IMR-90 (cell line): ENCODE measurements at regions of chr1 and their contacts with region 1.

Region 1: GRCh38 chr1:108746372-108747205 is at the start of gene STXBP3:
- DNase-seq: peak; percentile 98
- ATAC-seq: peak; percentile 95
- H3K4me3 ChIP-seq: peak within 1 kb of the TSS; percentile 76
- H3K27ac ChIP-seq: peak within 1 kb of the TSS; percentile 86
- H3K4me1 ChIP-seq: no peaks in the 10 kb centered on the region
- H3K27me3 ChIP-seq: peaks cover 4% of the 10 kb centered on the region; the same call in 1 of the 2 replicates
- CTCF ChIP-seq: peak; percentile 95
- POLR2A ChIP-seq: peak; percentile 92
- RAD21 ChIP-seq: peak; percentile 49
- total RNA-seq, gene STXBP3: 19.7 and 38.3 TPM in 2 replicates

Region 2: GRCh38 chr1:108691942-108692723 is 54.5 kb before region 1 on chr1 and contains the start of gene PRPF38B:
- CTCF ChIA-PET with region 1: no interaction called
- POLR2A ChIA-PET with region 1: interaction called, 5 read pairs
- dilution Hi-C with region 1: no loop called
- in situ Hi-C with region 1: loop called (anchors 5 kb)
- intact Hi-C with region 1: loop called (anchors 1 kb)
- DNase-seq: peak; percentile 87
- ATAC-seq: peak; percentile 97
- H3K4me3 ChIP-seq: peak within 1 kb of the TSS; percentile 84
- H3K27ac ChIP-seq: peak within 1 kb of the TSS; percentile 97
- H3K4me1 ChIP-seq: no peaks in the 10 kb centered on the region
- H3K27me3 ChIP-seq: no peaks in the 10 kb centered on the region
- CTCF ChIP-seq: no peak
- POLR2A ChIP-seq: peak; percentile 97
- RAD21 ChIP-seq: no peak
- total RNA-seq, gene PRPF38B: 9.0 and 15.0 TPM in 2 replicates

Region 3: DNA sequence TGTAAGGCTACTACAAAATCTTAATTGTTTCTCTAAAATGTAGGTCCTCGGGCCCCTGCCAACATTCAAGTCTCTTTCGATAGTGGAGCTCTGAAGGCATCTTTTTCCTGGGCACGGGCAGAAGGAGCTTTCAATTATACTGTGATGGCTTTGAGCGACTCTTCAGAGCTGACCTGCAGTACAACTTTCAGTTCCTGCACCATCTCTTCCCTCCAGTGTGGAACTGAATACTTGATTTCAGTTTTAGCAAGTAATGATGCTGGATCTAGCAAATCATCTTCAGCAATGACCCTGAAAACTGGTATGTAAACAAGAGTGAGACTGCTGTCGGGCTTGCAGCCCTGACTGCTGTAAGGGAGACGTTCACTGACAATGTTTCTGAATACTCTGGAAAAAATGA is 24.3 kb before region 1 on chr1:
- CTCF ChIA-PET with region 1: interaction called, 4 read pairs
- POLR2A ChIA-PET with region 1: no interaction called
- dilution Hi-C with region 1: no loop called
- in situ Hi-C with region 1: no loop called
- intact Hi-C with region 1: loop called (anchors 2 kb)
- DNase-seq: peak; percentile 77
- ATAC-seq: peak; percentile 71
- H3K4me3 ChIP-seq: peak overlapping the region; percentile 2; the same call in 1 of the 2 replicates
- H3K27ac ChIP-seq: peak overlapping the region; percentile 75; the same call in 1 of the 2 replicates
- H3K4me1 ChIP-seq: peaks cover 18% of the 10 kb centered on the region
- H3K27me3 ChIP-seq: no peaks in the 10 kb centered on the region
- CTCF ChIP-seq: no peak
- POLR2A ChIP-seq: no peak
- RAD21 ChIP-seq: peak; percentile 3; the same call in 1 of the 2 replicates

Region 4: GRCh38 chr1:108792420-108792819 is 45.8 kb after region 1 on chr1:
- CTCF ChIA-PET with region 1: no interaction called
- POLR2A ChIA-PET with region 1: interaction called, 10 read pairs
- dilution Hi-C with region 1: no loop called
- in situ Hi-C with region 1: no loop called
- intact Hi-C with region 1: no loop called
- DNase-seq: no peak
- ATAC-seq: no peak
- H3K4me3 ChIP-seq: no peak overlapping the region
- H3K27ac ChIP-seq: no peak overlapping the region
- H3K4me1 ChIP-seq: no peaks in the 10 kb centered on the region
- H3K27me3 ChIP-seq: no peaks in the 10 kb centered on the region
- CTCF ChIP-seq: no peak
- POLR2A ChIP-seq: no peak
- RAD21 ChIP-seq: no peak

Region 5: GRCh38 chr1:108963052-108963686 is 216.6 kb after region 1 on chr1 and contains the start of gene CLCC1:
- CTCF ChIA-PET with region 1: no interaction called
- POLR2A ChIA-PET with region 1: no interaction called
- dilution Hi-C with region 1: no loop called
- in situ Hi-C with region 1: no loop called
- intact Hi-C with region 1: no loop called
- DNase-seq: peak; percentile 90
- ATAC-seq: peak; percentile 99
- H3K4me3 ChIP-seq: peak within 1 kb of the TSS; percentile 100
- H3K27ac ChIP-seq: peak within 1 kb of the TSS; percentile 98
- H3K4me1 ChIP-seq: 0 out of 2 replicates have a peak, but pooled peaks cover 2% of the 10 kb centered on the region
- H3K27me3 ChIP-seq: no peaks in the 10 kb centered on the region
- CTCF ChIP-seq: no peak
- POLR2A ChIP-seq: peak; percentile 79; the same call in 1 of the 2 replicates
- RAD21 ChIP-seq: no peak
- total RNA-seq, gene CLCC1: 29.6 and 41.4 TPM in 2 replicates

Region 6: DNA sequence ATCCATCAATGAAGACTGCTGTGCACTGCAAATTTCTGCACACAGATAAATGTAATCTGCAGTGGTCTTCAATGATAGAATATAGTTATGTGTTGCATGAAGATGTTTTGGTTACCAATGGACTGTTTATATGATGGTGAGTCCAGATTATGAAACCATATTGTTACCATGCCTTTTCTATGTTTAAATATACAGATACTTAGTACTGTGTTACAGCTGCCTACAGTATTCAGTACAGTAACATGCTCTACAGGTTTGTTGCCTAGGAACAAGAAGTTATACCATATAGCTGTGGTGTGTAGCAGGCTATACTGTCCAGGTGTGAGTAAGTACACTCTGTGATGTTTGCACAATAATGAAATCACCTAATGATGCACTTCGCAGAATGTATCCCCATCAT is 610.3 kb after region 1 on chr1:
- CTCF ChIA-PET with region 1: no interaction called
- POLR2A ChIA-PET with region 1: no interaction called
- dilution Hi-C with region 1: no loop called
- in situ Hi-C with region 1: no loop called
- intact Hi-C with region 1: no loop called
- DNase-seq: peak; percentile 39
- ATAC-seq: peak; percentile 50
- H3K4me3 ChIP-seq: no peak overlapping the region
- H3K27ac ChIP-seq: no peak overlapping the region
- H3K4me1 ChIP-seq: peaks cover 9% of the 10 kb centered on the region
- H3K27me3 ChIP-seq: no peaks in the 10 kb centered on the region
- CTCF ChIP-seq: no peak
- POLR2A ChIP-seq: no peak
- RAD21 ChIP-seq: no peak